ENCODE measurements at regions of chr12 and their contacts with region 1.

Region 1: GRCh38 chr12:116818948-116819832 is 62.1 kb downstream of the HRK start:
- DNase-seq: peak; percentile 94
- ATAC-seq: peak; percentile 98

Region 2: DNA sequence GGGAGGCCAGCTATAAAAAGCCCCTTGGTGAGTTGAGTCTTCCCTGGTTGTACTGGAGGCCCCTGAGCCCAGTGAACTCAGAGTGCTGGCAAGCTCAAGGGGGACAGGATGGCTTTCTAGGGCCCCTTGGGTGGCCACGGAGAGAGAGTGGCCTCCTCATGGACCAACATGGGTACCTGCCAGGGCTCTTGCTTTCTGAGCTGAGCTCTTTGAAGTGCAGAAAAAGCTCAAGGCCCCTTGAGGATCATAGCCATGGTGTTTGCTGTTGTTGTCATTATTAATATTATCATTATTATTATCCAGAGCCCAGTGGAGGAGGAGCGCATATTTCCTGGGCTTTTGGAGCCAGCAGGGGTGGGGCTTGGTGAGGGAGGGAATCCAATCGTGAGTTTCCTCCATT is 74.4 kb before region 1 on chr12:
- intact Hi-C with region 1: loop called (anchors 5 kb)
- DNase-seq: no peak
- ATAC-seq: no peak

Measured in Right ventricle myocardium inferior (tissue), 1 donor.